Right cardiac atrium (tissue), 5 donors: ENCODE measurements at regions of chr12 and their contacts with region 1.

Region 1: DNA sequence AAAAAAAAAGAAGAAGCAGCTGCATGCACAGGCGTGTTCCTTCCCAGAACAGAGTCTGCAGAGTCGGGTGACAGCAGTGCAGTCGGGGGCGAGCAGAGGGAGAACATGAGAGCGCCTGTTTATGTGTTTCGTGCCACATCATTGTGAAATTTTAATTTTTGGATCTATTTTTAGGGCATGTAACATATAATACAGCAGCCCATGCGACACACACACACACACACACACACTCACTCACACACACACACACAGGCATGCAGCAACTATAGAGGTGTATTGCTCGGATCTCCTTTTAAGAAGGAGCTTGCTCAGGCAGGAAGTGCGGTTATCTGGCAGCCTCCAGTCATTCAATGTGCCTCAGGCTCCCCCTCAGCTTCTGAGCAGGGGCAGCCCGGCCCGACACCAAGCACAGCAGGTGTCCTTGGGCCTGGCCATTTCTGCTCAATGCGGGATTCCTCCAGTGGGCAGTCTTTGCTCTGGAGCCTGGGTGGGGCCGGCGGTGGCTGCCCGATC is 71.8 kb downstream of the ZNF664 start:
- DNase-seq: no peak
- ATAC-seq: no peak
- H3K4me3 ChIP-seq: no peak overlapping the region
- H3K27ac ChIP-seq: no peak overlapping the region
- H3K4me1 ChIP-seq: no peaks in the 10 kb centered on the region
- H3K27me3 ChIP-seq: no peaks in the 10 kb centered on the region

Region 2: GRCh38 chr12:124774462-124775167 is 729.8 kb after region 1 on chr12:
- intact Hi-C with region 1: loop called in 3 of 4 experiments (anchors 5 kb)
- DNase-seq: peak in 1 of 3 donors; percentile 59
- ATAC-seq: peak; percentile 10 to 38
- H3K4me3 ChIP-seq: peak overlapping the region; percentile 6
- H3K27ac ChIP-seq: no peak overlapping the region
- H3K4me1 ChIP-seq: no peaks in the 10 kb centered on the region
- H3K27me3 ChIP-seq: no peaks in the 10 kb centered on the region